Endothelial cell of umbilical vein (primary cell): ENCODE measurements at regions of chr11 and their contacts with region 1.

Region 1: GRCh38 chr11:75248690-75249268 is 8.2 kb downstream of the TPBGL start:
- DNase-seq: peak; percentile 88
- H3K4me3 ChIP-seq: no peak overlapping the region
- H3K27ac ChIP-seq: no peak overlapping the region
- H3K4me1 ChIP-seq: no peaks in the 10 kb centered on the region
- H3K27me3 ChIP-seq: peaks cover 19 to 28% of the 10 kb centered on the region in 2 experiments
- CTCF ChIP-seq: peak; percentile 99 to 100
- POLR2A ChIP-seq: no peak

Region 2: DNA sequence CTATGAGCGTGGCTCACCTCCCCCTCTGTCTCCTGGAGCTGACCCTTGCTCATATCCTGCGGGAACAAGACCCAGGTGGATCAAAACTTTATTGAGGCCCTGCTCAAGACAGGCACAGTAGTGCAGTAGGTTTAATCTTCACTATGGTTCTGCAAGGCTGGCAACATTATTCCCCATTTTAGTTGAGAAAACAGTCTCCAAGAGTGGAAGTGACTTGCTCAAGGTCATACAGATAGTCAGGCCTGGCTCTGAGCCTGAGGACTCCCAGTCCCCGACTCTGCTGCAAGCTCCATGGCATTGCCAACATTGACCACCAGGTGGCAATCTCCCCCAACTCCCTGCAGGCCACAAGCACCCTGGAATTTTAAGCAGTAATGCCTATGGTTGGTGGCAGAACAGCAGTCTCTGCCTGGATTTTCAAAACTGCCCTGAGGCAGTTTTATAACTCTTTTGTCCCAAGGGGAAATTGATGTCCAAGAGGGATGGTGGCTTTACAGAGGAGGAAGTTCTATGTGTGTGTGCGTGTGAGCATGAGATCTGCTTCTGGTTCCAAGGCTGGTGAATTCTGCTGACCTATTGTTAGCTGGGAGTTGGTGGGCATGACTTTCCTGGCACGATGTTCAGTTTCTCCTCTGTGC is 225.9 kb before region 1 on chr11:
- CTCF ChIA-PET with region 1: interaction called, 159 read pairs
- POLR2A ChIA-PET with region 1: no interaction called
- dilution Hi-C with region 1: no loop called
- intact Hi-C with region 1: loop called (anchors 1 kb)
- DNase-seq: peak; percentile 83
- H3K4me3 ChIP-seq: no peak overlapping the region
- H3K27ac ChIP-seq: no peak overlapping the region
- H3K4me1 ChIP-seq: no peaks in the 10 kb centered on the region
- H3K27me3 ChIP-seq: peaks cover 0 to 2% of the 10 kb centered on the region in 2 experiments
- CTCF ChIP-seq: peak; percentile 94 to 97
- POLR2A ChIP-seq: no peak

Region 3: GRCh38 chr11:75214411-75214821 is 34.4 kb before region 1 on chr11:
- CTCF ChIA-PET with region 1: interaction called, 65 read pairs
- POLR2A ChIA-PET with region 1: no interaction called
- dilution Hi-C with region 1: no loop called
- intact Hi-C with region 1: loop called (anchors 1 kb)
- DNase-seq: peak; percentile 73
- H3K4me3 ChIP-seq: no peak overlapping the region
- H3K27ac ChIP-seq: no peak overlapping the region
- H3K4me1 ChIP-seq: no peaks in the 10 kb centered on the region
- H3K27me3 ChIP-seq: peaks cover under 1 to 1% of the 10 kb centered on the region in 2 experiments
- CTCF ChIP-seq: peak; percentile 48 to 63
- POLR2A ChIP-seq: no peak

Region 4: DNA sequence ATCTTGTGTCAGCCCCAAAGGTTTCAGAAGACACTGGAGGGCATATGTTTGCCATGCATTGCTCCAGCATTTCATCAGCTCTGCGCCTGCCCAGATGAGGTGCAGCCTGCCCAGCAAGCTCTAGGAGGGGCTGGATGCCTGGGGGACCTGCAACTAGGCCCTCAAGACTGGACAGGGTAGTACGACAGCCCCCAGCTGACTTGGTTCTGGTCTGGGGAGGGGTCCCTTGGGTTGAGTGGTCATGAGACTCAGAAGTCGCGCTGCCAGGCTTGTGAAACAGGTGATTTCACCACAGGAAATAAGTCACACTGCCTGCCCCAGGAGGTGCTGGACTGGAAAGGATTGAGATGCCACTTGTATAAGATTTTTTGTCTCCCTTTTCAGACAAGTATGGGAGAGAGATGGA is 15.2 kb after region 1 on chr11:
- CTCF ChIA-PET with region 1: interaction called, 30 read pairs
- POLR2A ChIA-PET with region 1: no interaction called
- dilution Hi-C with region 1: no loop called
- intact Hi-C with region 1: no loop called
- DNase-seq: peak; percentile 28
- H3K4me3 ChIP-seq: no peak overlapping the region
- H3K27ac ChIP-seq: no peak overlapping the region
- H3K4me1 ChIP-seq: no peaks in the 10 kb centered on the region
- H3K27me3 ChIP-seq: no peaks in the 10 kb centered on the region
- CTCF ChIP-seq: no peak
- POLR2A ChIP-seq: no peak